GM12878 (cell line): ENCODE measurements at regions of chr6 and their contacts with region 1.

Region 1: DNA sequence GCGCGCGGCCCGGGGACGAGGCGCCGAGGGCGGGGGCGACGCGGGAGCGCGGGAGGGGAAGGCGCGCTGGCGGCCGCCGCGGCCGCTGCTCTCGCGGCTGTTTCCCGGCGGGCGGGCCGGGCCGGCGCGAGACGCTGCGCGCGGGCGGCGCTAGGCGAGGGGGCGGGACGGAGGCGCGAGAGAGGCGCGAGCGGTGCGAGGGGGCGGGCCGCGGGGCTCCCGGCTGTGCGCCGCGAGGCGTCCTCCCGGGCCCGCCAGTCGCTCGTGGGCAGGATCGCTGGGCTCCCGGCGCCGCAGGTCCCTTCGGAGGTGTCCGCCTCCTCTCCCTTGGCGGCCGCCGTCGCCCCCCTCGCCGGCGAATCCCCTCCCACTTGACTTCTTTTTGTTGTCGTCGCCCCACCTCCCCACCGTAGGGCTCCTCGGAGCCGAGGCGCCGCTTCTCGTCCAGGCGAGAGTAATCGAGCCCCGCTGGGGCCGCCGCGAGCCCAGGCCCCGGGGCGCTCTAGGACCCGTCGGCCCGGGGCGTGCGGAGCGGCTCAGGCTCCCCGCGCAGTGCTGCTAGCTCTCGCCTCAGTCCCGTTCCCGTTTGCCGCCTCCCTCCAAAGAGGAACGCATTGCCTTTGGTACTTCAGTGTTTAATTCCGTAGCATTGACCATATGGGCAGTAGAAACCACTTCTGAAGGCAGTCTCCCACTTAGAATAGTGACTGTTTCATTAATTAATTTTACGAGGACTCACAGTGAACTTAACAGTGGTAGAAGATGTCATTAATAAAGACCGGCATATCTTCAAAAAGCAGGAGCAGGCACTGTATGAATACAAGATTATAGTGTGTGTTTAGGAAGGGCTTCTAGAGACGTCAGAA is at the start of gene RANBP9:
- DNase-seq: peak; percentile 43
- ATAC-seq: peak; percentile 88
- H3K4me3 ChIP-seq: peak within 1 kb of the TSS; percentile 96
- H3K27ac ChIP-seq: peak within 1 kb of the TSS; percentile 87
- H3K4me1 ChIP-seq: no peaks in the 10 kb centered on the region
- H3K27me3 ChIP-seq: no peaks in the 10 kb centered on the region
- CTCF ChIP-seq: no peak
- EP300 ChIP-seq: peak in 1 of 2 experiments; percentile 3; a peak in 1 of 4 replicates
- POLR2A ChIP-seq: peak; percentile 87
- RAD21 ChIP-seq: 0 out of 2 replicates have a peak, but pooled peaks have one; percentile 1
- polyA plus RNA-seq, gene RANBP9: 8.2 to 10.8 TPM

Region 2: DNA sequence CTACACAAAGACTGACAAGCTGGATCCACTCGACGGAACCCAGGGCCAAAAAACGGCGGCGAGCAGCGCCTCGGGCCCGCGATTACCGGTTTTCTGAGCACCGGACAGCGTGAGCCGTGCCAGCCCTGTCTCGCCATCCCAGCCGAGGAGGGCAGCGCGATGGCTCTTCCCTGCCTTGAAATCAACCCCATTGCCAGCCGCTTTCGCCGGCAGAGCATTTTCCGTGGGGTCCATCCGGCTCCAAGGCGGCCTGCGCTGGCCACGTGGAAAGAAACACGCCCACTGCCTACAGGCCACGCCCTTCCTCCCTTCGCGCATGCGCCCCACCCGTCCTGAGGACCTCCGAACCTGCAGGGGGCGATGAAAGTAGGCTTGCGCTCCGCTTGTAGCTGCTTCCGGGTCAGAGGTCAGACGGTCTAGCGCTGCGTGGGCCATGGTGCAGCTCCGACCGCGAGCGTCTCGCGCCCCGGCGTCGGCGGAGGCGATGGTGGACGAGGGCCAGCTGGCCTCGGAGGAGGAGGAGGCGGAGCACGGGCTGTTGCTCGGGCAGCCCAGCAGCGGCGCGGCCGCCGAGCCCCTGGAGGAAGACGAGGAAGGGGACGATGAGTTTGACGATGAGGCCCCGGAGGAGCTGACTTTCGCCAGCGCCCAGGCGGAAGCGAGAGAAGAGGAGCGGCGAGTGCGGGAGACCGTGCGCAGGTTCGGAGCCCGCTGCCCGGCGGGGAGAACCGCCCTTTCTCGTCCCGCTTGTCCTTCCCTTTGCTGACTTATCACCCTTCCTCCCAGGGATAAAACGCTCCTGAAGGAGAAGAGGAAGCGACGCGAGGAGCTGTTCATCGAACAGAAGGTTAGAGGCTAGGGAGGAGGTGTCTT is 96.8 kb before region 1 on chr6 and contains the start of gene NOL7:
- CTCF ChIA-PET with region 1: interaction called, 14 read pairs
- POLR2A ChIA-PET with region 1: interaction called, 12 read pairs
- RAD21 ChIA-PET with region 1: interaction called, 21 read pairs
- SMC1A ChIA-PET with region 1: interaction called, 9 read pairs
- in situ Hi-C with region 1: no loop called
- intact Hi-C with region 1: loop called (anchors 5 kb)
- DNase-seq: peak; percentile 95
- ATAC-seq: peak; percentile 91
- H3K4me3 ChIP-seq: peak within 1 kb of the TSS; percentile 94
- H3K27ac ChIP-seq: peak within 1 kb of the TSS; percentile 96
- H3K4me1 ChIP-seq: peaks cover 17% of the 10 kb centered on the region
- H3K27me3 ChIP-seq: no peaks in the 10 kb centered on the region
- CTCF ChIP-seq: peak; percentile 96 to 99 (median 98); a peak in 5 of 6 replicates
- EP300 ChIP-seq: no peak
- POLR2A ChIP-seq: peak; percentile 99
- RAD21 ChIP-seq: no peak
- polyA plus RNA-seq, gene NOL7: 12.2 to 31.2 TPM

Region 3: DNA sequence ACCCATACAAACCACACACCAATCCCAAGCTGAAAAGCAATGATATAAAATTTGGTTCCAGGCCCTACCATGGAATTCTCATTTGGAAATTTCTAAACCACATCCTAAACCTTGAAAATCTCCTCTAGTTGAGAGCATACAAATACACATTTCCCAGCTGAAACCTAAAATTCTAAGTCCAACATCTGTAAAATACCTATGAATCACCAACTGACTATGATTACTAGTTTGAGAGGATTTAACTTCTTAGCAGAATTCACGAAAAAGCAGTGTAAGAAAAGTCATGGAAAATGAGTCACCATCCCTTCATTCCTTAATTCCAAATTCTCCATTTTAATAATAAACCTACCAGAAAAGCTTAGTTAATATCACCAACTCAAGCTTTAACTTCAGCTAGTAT is 15.7 kb before region 1 on chr6:
- CTCF ChIA-PET with region 1: interaction called, 10 read pairs
- POLR2A ChIA-PET with region 1: interaction called, 7 read pairs
- RAD21 ChIA-PET with region 1: interaction called, 13 read pairs
- SMC1A ChIA-PET with region 1: interaction called, 27 read pairs
- in situ Hi-C with region 1: no loop called
- intact Hi-C with region 1: no loop called
- DNase-seq: no peak
- ATAC-seq: no peak
- H3K4me3 ChIP-seq: no peak overlapping the region
- H3K27ac ChIP-seq: no peak overlapping the region
- H3K4me1 ChIP-seq: peaks cover 9% of the 10 kb centered on the region; the same call in 1 of the 2 replicates
- H3K27me3 ChIP-seq: no peaks in the 10 kb centered on the region
- CTCF ChIP-seq: no peak
- EP300 ChIP-seq: no peak
- POLR2A ChIP-seq: no peak
- RAD21 ChIP-seq: no peak

Region 4: DNA sequence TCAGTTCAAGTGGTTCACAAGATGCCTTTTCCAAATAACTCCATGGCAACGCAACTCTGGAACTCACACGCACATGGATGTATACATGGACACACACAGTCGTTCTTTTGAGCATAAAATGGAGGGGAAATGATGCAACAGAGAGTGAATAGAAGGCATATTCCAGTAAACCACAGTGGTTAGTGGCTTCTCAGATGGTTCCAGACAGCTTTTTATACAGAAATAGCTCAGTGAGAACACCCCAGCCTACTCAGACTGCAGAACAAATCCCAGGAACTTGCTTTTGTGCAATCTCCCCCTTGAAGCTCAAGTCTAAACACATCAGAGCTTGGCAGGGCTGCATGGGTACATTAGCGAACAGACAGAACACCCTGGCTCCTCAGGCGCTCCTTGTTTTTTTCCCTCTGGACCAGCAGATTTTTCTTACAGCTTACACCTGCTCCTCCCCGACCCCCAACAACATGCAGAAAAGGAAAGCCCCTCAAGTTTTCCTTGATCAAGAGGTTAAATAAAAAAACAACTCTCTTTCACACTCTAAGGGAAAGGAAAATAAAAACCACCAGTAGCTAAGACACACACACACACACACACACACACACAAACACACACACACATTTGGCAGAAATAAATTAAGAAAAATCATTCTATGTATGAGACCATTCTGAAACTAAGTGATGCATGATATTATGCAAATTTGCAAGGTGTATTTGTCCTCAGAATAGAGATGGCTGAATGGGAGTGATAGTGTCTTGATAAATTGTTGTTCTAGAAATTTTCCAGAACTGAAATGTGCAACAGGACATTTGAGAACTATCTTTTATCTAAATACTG is 50.9 kb after region 1 on chr6:
- CTCF ChIA-PET with region 1: no interaction called
- POLR2A ChIA-PET with region 1: no interaction called
- RAD21 ChIA-PET with region 1: interaction called, 3 read pairs
- SMC1A ChIA-PET with region 1: no interaction called
- in situ Hi-C with region 1: no loop called
- intact Hi-C with region 1: loop called (anchors 2 kb)
- DNase-seq: peak; percentile 25
- ATAC-seq: peak; percentile 67
- H3K4me3 ChIP-seq: no peak overlapping the region; the same call in 1 of the 2 replicates
- H3K27ac ChIP-seq: no peak overlapping the region
- H3K4me1 ChIP-seq: peaks cover 23% of the 10 kb centered on the region
- H3K27me3 ChIP-seq: peaks cover 0 to 2% of the 10 kb centered on the region in 2 experiments; a peak in 2 of 4 replicates
- CTCF ChIP-seq: no peak
- EP300 ChIP-seq: no peak
- POLR2A ChIP-seq: no peak
- RAD21 ChIP-seq: no peak

Region 5: DNA sequence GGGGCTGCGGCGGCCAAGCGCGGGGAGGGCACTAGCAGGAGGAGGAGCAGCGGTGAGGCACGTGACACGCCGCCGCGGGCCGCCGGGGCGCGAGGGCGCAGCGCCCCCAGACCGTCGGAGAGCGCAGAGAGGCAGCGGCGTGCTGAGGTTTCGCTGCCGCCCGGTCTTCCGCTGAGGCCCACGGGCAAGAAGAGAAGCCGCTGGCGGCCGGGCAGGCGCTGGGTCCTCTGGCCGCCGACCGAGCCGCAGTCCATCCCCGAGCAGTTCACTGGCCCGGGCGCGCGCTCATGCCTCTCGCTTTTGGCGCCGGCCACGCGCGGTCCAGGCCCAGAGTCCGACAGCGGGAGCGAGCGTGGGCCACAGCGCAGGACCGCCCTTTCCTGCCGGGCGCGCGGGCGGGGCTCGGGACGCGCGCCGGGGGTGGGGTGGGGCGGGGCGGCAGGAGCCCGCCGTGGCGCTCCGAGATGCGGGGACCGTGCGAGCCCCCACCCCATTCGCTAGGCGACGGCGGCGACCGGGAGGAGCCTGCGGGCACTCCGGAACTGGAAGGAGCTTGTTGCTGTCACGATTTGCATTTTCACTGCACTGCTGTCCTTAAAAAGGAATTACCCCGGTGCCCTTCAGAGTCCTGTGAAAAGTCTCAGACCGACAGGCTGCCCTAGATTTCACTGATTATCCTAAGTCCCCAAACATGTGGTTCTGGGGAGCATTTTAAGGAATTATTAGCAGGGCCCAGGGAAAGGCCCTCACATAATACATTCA is 102.4 kb after region 1 on chr6 and contains the start of gene MCUR1:
- CTCF ChIA-PET with region 1: no interaction called
- POLR2A ChIA-PET with region 1: interaction called, 3 read pairs
- RAD21 ChIA-PET with region 1: interaction called, 3 read pairs
- SMC1A ChIA-PET with region 1: no interaction called
- in situ Hi-C with region 1: no loop called
- intact Hi-C with region 1: loop called (anchors 1 kb)
- DNase-seq: peak; percentile 80
- ATAC-seq: peak; percentile 89
- H3K4me3 ChIP-seq: peak within 1 kb of the TSS; percentile 74
- H3K27ac ChIP-seq: peak within 1 kb of the TSS; percentile 95
- H3K4me1 ChIP-seq: peaks cover 6% of the 10 kb centered on the region
- H3K27me3 ChIP-seq: no peaks in the 10 kb centered on the region
- CTCF ChIP-seq: peak in 2 of 3 experiments; percentile 5 to 45; a peak in 2 of 6 replicates
- EP300 ChIP-seq: no peak
- POLR2A ChIP-seq: peak; percentile 92
- RAD21 ChIP-seq: 0 out of 2 replicates have a peak, but pooled peaks have one; percentile 2
- polyA plus RNA-seq, gene MCUR1: 4.4 to 9.4 TPM